GM10248 (cell line): ENCODE measurements at regions of chr16 and their contacts with region 1.

Region 1: DNA sequence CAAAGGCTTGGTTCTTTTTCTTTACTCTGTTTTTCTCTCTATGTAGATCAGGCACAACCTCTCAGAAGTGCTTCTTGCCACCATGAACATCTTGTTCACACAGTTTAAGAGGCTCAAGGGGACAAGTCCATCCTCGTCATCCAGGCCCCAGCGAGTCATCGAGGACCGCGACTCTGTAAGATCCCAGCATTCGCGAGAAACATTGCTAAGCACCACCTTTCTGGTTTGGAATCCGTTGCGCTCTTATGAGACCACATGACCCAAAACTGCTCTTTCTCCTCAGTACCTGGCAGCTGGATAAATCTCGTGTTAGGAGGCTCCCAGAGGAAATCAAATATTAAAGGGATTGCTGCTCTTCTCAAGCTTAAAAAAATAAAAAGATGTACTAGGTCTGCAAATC is 23.3 kb upstream of the SLC12A3 start:
- DNase-seq: no peak
- CTCF ChIP-seq: no peak

Region 2: GRCh38 chr16:55773859-55774549 is 1067.7 kb before region 1 on chr16:
- CTCF ChIA-PET with region 1: no interaction called
- POLR2A ChIA-PET with region 1: no interaction called
- DNase-seq: no peak
- CTCF ChIP-seq: no peak

Region 3: DNA sequence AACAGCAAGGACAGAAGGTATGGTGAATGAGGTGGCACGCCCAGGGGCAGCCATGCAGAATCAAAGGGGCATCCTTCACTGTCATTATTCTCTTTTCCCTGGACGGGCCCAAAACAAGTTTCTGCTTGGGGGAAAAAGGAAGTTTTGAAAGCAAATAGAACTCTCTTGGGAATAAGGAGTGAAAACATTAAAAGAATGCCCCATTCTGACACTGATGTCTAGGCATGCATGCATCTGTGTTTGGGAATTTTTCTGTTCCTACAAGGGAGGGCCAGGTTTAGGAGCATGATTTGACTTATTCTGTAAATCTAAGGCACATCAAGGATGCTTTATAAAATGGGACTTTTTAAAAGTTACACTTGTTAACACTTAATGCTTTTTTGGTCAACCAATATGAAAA is 11.0 kb before region 1 on chr16:
- CTCF ChIA-PET with region 1: interaction called, 13 read pairs
- POLR2A ChIA-PET with region 1: no interaction called
- DNase-seq: no peak
- CTCF ChIP-seq: no peak